ENCODE measurements at regions of chr3 and their contacts with region 1.

Region 1: DNA sequence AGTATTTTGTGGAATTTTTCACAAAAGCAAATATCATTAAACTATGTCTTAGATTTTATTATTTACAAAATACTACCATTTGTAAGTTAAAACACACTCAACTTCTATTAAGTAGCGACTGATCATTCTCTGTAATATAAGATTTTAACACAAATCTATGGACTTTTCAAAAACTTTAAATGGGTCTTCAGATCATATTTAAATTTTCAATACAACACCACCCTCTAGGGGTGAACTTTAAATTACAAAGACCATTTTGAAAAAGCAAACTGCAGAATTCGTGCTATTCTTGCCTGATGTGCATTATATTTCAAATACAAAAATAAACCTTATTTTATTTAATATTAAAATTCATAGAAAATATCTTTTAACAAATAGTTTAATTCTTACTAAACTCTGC is 8.2 kb upstream of the VGLL4 start:
- DNase-seq: no peak
- ATAC-seq: no peak
- H3K4me3 ChIP-seq: no peak overlapping the region
- H3K27ac ChIP-seq: no peak overlapping the region
- H3K4me1 ChIP-seq: no peaks in the 10 kb centered on the region
- H3K27me3 ChIP-seq: no peaks in the 10 kb centered on the region
- CTCF ChIP-seq: peak in 2 of 3 experiments; percentile 23 to 52; a peak in 3 of 6 replicates
- EP300 ChIP-seq: no peak
- POLR2A ChIP-seq: no peak
- RAD21 ChIP-seq: peak; percentile 66

Region 2: GRCh38 chr3:10945683-10946287 is 706.1 kb before region 1 on chr3:
- CTCF ChIA-PET with region 1: interaction called, 3 read pairs
- POLR2A ChIA-PET with region 1: no interaction called
- RAD21 ChIA-PET with region 1: no interaction called
- SMC1A ChIA-PET with region 1: interaction called, 4 read pairs
- in situ Hi-C with region 1: loop called (anchors 10 kb)
- intact Hi-C with region 1: loop called (anchors 2 kb)
- DNase-seq: no peak
- ATAC-seq: peak; percentile 98
- H3K4me3 ChIP-seq: no peak overlapping the region
- H3K27ac ChIP-seq: no peak overlapping the region
- H3K4me1 ChIP-seq: no peaks in the 10 kb centered on the region
- H3K27me3 ChIP-seq: no peaks in the 10 kb centered on the region
- CTCF ChIP-seq: peak; percentile 64 to 86 (median 70)
- EP300 ChIP-seq: no peak
- POLR2A ChIP-seq: no peak
- RAD21 ChIP-seq: peak; percentile 48

Region 3: GRCh38 chr3:11230125-11230524 is 421.8 kb before region 1 on chr3:
- CTCF ChIA-PET with region 1: interaction called, 19 read pairs
- POLR2A ChIA-PET with region 1: no interaction called
- RAD21 ChIA-PET with region 1: no interaction called
- SMC1A ChIA-PET with region 1: no interaction called
- in situ Hi-C with region 1: loop called (anchors 5 kb)
- intact Hi-C with region 1: no loop called
- DNase-seq: no peak
- ATAC-seq: no peak
- H3K4me3 ChIP-seq: no peak overlapping the region
- H3K27ac ChIP-seq: no peak overlapping the region
- H3K4me1 ChIP-seq: peaks cover 3% of the 10 kb centered on the region; the same call in 1 of the 2 replicates
- H3K27me3 ChIP-seq: no peaks in the 10 kb centered on the region
- CTCF ChIP-seq: no peak
- EP300 ChIP-seq: no peak
- POLR2A ChIP-seq: no peak
- RAD21 ChIP-seq: no peak

Region 4: GRCh38 chr3:11379233-11379823 is 272.6 kb before region 1 on chr3:
- CTCF ChIA-PET with region 1: interaction called, 75 read pairs
- POLR2A ChIA-PET with region 1: no interaction called
- RAD21 ChIA-PET with region 1: interaction called, 53 read pairs
- SMC1A ChIA-PET with region 1: interaction called, 55 read pairs
- in situ Hi-C with region 1: loop called (anchors 5 kb)
- intact Hi-C with region 1: loop called (anchors 1 kb)
- DNase-seq: peak; percentile 13
- ATAC-seq: peak; percentile 49; the same call in 2 of the 3 replicates
- H3K4me3 ChIP-seq: no peak overlapping the region
- H3K27ac ChIP-seq: no peak overlapping the region
- H3K4me1 ChIP-seq: no peaks in the 10 kb centered on the region
- H3K27me3 ChIP-seq: no peaks in the 10 kb centered on the region
- CTCF ChIP-seq: peak; percentile 22 to 60 (median 44); a peak in 4 of 6 replicates
- EP300 ChIP-seq: no peak
- POLR2A ChIP-seq: no peak
- RAD21 ChIP-seq: peak; percentile 69

Region 5: DNA sequence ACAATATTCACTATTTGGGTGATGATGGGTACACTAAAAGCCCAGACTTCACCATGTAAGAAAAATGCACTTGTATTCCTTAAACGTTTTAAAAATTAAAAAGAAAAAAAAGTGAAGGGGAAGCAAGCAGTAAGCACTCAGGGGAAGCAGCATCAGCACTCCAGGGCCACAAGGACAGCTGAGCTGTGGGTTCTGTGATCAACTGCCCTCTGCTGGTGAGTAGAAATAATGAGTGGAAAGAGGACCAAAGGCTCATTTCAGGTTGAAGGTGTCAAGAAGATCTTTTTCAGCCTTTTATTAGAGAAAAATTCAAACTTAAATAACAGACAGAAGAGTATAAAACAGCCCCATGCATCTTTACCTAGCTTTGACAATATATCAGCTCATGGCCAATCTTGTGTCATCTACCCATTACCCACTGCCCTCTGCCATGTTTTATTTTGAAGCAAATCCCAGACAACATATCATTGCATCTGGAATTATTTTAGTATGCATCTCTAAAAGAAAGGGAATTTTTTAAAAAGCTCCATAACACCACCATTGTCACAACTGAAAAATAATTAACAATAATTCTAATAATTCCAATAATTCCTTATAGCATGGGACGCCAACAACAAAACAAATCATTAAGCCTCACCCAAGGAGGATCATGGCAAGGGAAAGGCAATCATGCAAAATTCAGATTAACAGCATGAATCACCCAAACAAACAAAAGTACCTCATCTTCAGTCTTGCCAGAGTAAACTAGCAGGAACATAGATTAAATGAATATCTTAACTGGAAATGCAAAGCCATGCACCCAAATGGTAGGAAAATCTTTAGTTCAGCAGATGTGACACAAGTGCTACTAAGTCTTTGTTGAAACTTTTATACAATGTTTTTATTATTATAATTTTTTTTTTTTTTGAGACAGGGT is 152.3 kb after region 1 on chr3:
- CTCF ChIA-PET with region 1: interaction called, 4 read pairs
- POLR2A ChIA-PET with region 1: no interaction called
- RAD21 ChIA-PET with region 1: no interaction called
- SMC1A ChIA-PET with region 1: interaction called, 3 read pairs
- in situ Hi-C with region 1: no loop called
- intact Hi-C with region 1: loop called (anchors 1 kb)
- DNase-seq: no peak
- ATAC-seq: peak; percentile 94
- H3K4me3 ChIP-seq: no peak overlapping the region
- H3K27ac ChIP-seq: no peak overlapping the region
- H3K4me1 ChIP-seq: no peaks in the 10 kb centered on the region
- H3K27me3 ChIP-seq: no peaks in the 10 kb centered on the region
- CTCF ChIP-seq: peak; percentile 59 to 73 (median 69)
- EP300 ChIP-seq: no peak
- POLR2A ChIP-seq: no peak
- RAD21 ChIP-seq: peak; percentile 61